Posterior cingulate gyrus (tissue), 11 donors: ENCODE measurements at regions of chr3 and their contacts with region 1.

Region 1: GRCh38 chr3:67384760-67385397 is 269.5 kb downstream of the SUCLG2 start:
- DNase-seq: peak; percentile 15 to 90 (median 51)

Region 2: DNA sequence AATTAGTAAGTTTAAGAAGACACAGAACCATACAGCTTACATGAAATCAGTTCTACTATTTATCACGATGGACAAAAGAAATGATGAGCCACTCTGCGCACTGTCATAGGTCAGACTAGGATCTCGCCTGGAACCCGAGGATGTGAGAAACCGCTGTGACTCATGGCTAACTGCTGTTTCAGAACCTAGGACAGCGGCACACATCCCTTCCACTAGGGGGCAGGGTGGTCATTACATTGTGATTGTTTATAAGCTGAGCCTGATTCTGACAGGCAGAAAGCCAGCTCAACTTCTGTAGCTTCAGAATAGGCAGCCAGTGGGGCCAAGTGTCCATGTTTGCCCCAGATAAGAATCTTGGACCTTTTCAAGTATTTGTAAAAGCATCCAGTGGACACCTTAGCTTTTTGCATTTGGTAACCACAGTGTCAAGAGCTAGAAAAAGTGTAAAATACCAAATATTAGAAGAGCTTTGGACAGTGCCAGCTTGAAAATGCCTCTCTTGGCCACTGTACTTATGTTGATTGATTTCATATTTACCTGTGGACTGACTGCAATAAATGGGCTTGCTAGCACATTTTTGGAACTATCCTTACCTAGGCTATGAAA is 271.0 kb before region 1 on chr3:
- intact Hi-C with region 1: loop called (anchors 10 kb)
- DNase-seq: peak; percentile 56 to 95 (median 79)

Region 3: DNA sequence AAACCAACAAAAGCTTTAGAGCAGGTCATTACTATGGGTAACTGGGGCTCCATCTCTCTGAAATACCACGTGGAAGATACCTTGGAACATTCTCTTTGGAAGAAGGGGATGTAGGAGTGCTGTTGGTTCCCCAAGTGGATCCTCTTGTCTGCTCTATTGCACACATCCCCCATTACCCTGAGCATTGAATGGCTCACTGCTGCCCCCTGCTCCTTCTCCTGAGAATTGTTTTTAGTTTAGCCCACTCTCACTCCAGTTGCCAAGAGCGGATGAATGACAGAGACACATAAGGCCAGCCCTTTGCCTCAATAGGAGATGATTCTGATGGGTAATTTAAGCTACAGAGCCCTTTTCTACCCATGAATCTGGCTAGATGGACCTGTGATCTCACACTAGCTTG is 405.2 kb after region 1 on chr3:
- intact Hi-C with region 1: loop called (anchors 10 kb)
- DNase-seq: peak in 3 of 10 donors; percentile 9 to 50 (median 31)

Region 4: DNA sequence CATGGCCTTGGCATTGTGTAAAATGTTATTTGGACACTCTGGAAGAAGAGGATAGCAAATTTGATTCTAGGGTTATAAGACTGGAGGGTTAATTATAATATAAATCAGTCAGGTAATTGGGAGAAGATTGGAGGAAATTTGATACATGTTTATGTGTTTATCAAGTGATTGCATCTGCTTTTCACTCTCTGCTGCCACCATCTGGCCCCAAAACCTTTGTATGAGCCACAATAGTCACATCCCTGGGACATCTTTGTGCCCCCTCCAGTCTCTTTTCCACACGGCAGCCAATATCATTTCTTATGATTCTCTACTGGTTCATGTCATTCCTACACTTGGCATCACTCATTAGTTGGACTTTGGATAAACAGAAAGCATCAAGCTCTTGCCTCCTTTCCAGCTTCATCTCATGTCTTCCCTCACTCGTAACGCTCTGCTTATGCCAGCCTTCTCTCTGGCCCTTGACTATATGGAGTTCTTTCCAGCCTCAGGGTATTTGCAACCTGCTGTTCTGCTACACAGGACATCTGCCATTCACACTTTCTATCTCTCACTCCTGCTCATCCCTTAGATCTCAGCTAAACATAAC is 871.9 kb after region 1 on chr3:
- intact Hi-C with region 1: loop called (anchors 10 kb)
- DNase-seq: peak in 4 of 10 donors; percentile 19 to 61 (median 29)

Region 5: DNA sequence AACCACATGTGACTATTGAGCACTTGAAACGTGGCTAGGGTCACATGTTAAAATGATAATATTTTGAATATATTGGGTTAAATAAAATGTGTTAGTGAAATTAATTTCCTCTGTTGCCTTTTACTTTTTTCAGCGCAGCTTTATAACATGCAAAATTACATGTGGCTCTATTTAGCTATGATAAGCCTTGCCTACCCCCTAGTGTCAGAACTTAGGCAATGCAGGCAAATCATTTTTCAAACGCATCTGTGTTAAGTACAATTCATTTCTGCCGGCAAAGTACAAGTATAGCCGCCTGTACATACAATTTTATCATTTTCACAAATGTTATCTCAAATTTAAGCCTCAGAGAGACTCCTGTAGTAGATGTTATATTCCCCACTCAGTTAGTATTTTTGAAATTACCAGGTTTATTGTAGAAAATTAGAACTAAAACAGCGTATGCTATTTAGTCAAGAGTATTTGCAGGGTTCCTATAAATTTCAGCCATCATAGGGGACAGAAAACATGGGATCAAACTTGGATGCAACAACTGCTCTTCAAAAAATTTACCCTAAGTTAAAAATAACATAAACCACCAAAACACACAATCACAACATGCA is 1491.3 kb after region 1 on chr3:
- intact Hi-C with region 1: loop called (anchors 5 kb)
- DNase-seq: peak in 3 of 10 donors; percentile 12 to 27 (median 19)